Cardiac septum (tissue), 1 donor: ENCODE measurements at regions of chr6 and their contacts with region 1.

Region 1: DNA sequence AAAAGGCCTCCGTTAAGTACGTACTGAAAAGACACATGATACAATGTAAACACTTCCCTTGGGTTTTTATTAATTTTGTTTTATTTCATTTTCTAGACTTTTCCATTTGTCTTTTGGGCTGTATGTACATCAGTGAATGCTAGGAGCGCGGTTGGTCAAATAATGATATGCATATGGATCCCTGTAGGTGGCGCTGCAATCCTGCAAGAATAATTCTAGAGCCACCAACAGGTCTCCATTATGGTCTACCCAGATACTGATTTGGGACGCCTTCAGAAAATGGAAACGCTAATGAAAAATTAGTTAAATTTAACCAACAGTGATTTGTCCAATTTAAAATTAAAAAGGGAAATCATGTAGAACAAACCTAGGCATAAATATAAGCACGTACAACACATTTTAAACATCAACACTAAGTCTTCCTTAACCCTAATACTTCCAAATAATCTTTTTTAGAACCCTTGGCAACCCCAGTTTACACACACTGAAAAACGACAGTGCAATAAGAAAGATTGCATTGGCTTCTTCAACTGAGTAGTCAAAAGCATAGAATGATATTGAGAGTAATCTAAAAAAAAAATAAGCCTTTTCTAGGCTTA is 433.5 kb downstream of the RFPL4B start:
- DNase-seq: no peak

Region 2: GRCh38 chr6:113047148-113047547 is 266.6 kb after region 1 on chr6:
- intact Hi-C with region 1: no loop called
- DNase-seq: no peak

Region 3: DNA sequence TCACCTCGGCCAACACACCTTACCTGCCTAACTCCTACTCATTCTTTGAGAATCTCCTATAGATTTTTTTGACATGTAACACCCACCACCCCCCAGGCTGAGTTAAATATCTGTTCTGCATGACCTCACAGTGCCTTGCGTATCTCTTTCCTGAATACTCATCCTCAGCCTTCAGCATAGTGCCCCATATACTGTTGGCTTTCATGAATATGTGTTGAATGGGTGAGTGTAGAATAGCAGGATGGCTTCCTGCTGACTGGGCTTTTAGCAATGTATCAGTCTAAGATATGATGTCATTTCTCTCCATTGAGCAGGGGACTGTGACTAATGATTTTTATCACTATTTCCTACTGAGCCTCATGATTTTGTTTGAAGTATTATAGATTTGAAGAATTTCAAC is 714.9 kb after region 1 on chr6:
- intact Hi-C with region 1: loop called (anchors 10 kb)
- DNase-seq: no peak

Region 4: GRCh38 chr6:113909234-113909856 is 1128.7 kb after region 1 on chr6:
- intact Hi-C with region 1: loop called (anchors 10 kb)
- DNase-seq: no peak